CD4-positive, alpha-beta T cell (primary cell): ENCODE measurements at regions of chr2 and their contacts with region 1.

Region 1: GRCh38 chr2:11129598-11130449 is 25.4 kb upstream of the SLC66A3 start:
- DNase-seq: peak; percentile 71 to 94 (median 86)
- ATAC-seq: peak; percentile 91
- H3K4me3 ChIP-seq: peak overlapping the region; percentile 51
- H3K4me3 Mint-ChIP-seq: peak overlapping the region; percentile 77
- H3K27ac ChIP-seq: peak overlapping the region; percentile 51 to 74
- H3K27ac Mint-ChIP-seq: peak overlapping the region; percentile 76
- H3K4me1 ChIP-seq: peaks cover 54% of the 10 kb centered on the region
- H3K4me1 Mint-ChIP-seq: peaks cover 46% of the 10 kb centered on the region
- H3K27me3 ChIP-seq: no peaks in the 10 kb centered on the region
- H3K27me3 Mint-ChIP-seq: no peaks in the 10 kb centered on the region
- CTCF ChIP-seq: peak; percentile 69

Region 2: DNA sequence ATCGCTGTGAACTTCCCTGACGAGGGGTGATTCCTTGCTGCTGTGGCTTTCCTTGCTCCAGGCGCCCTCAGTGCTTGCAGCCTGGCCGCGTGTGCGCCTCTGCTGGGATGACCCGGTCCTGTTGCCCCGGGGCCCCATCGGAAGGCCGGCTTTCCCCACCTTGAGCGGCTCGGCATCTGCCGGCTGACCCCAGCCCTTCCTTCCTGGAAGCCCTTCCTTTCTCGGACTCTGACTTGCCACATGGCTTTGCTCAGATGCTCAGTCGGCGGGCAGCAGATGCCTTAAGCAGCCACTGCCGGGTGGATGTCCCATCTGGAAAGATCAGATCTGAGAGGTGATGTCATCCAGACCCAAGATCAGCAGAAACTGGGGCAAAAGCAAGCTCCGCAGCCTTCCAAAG is 581.2 kb before region 1 on chr2:
- CTCF ChIA-PET with region 1: no interaction called
- POLR2A ChIA-PET with region 1: no interaction called
- intact Hi-C with region 1: no loop called
- DNase-seq: no peak
- ATAC-seq: no peak
- H3K4me3 ChIP-seq: no peak overlapping the region
- H3K4me3 Mint-ChIP-seq: no peak overlapping the region
- H3K27ac ChIP-seq: no peak overlapping the region
- H3K27ac Mint-ChIP-seq: no peak overlapping the region
- H3K4me1 ChIP-seq: peaks cover 16% of the 10 kb centered on the region
- H3K4me1 Mint-ChIP-seq: no peaks in the 10 kb centered on the region
- H3K27me3 ChIP-seq: peaks cover 26 to 33% of the 10 kb centered on the region in 2 experiments
- H3K27me3 Mint-ChIP-seq: peaks cover 49% of the 10 kb centered on the region
- CTCF ChIP-seq: no peak

Region 3: DNA sequence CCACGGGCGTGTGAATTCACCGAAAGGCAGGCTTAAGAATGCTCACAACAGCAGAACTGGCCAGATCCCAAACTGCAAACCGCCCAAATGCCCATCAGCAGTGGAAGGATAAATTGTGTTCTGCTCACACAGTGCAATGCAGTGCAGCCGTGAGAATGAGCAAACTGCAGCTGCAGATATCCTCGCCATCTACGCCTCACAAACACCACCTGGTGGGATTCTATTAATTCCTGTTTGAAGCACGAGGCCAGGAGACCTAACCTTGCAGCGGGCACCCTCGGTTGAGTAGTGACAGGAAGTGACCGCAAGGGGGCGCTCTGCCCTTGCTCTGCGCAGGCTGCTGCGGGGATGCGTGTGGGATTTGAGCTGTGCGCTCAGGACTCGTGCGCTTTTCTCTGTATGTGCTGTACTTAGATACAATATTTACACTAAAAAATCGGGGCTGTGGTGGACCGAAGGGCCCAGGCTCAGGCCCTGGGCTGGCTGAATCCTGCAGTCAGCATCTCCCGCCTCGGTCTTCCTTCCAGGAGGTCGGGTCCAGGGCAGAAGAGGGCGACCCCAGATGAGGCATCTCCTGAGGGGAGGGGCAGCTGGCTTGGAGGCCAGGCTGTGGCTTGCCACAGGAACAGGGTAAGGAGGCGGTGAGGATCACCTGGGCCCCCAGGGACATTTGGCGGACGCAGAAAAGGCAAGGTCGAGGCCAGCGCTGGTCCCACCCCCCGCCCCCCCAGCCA is 297.5 kb before region 1 on chr2:
- CTCF ChIA-PET with region 1: interaction called, 21 read pairs
- POLR2A ChIA-PET with region 1: interaction called, 13 read pairs
- intact Hi-C with region 1: loop called in 1 of 2 experiments (anchors 1 kb)
- DNase-seq: peak; percentile 69 to 91 (median 78)
- ATAC-seq: peak; percentile 93
- H3K4me3 ChIP-seq: no peak overlapping the region
- H3K4me3 Mint-ChIP-seq: peak overlapping the region; percentile 38
- H3K27ac ChIP-seq: no peak overlapping the region
- H3K27ac Mint-ChIP-seq: no peak overlapping the region
- H3K4me1 ChIP-seq: peaks cover 15% of the 10 kb centered on the region
- H3K4me1 Mint-ChIP-seq: peaks cover 7% of the 10 kb centered on the region
- H3K27me3 ChIP-seq: peaks cover 8 to 10% of the 10 kb centered on the region in 2 experiments
- H3K27me3 Mint-ChIP-seq: peaks cover 24% of the 10 kb centered on the region
- CTCF ChIP-seq: peak; percentile 99

Region 4: DNA sequence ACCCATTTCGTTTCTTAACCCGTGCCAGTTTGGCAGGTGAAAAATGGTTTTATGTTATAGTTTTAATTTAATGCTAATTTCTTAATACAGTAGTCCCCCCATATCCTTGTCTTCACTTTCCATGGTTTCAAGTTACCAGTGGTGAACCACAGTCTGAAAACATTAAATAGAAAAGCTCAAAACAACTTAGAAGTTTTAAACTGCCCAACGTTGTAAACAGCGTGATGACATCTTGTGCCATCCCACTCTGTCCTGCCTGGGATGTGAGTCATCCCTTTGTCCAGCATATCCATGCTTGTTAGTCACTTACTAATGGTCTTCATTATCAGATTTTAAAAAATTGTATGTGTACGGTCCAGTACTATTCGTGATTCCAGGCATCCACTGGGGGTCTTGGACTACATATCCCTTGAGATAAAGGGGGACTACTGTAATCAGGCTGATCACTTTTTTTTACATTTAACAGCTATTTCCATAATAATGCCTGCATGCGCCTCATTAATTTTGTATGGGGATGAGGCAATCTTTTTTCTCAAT is 57.3 kb after region 1 on chr2:
- CTCF ChIA-PET with region 1: interaction called, 10 read pairs
- POLR2A ChIA-PET with region 1: no interaction called
- intact Hi-C with region 1: loop called in 1 of 2 experiments (anchors 5 kb)
- DNase-seq: peak in 2 of 14 experiments; percentile 10 to 26
- ATAC-seq: no peak
- H3K4me3 ChIP-seq: no peak overlapping the region
- H3K4me3 Mint-ChIP-seq: no peak overlapping the region
- H3K27ac ChIP-seq: no peak overlapping the region
- H3K27ac Mint-ChIP-seq: no peak overlapping the region
- H3K4me1 ChIP-seq: no peaks in the 10 kb centered on the region
- H3K4me1 Mint-ChIP-seq: no peaks in the 10 kb centered on the region
- H3K27me3 ChIP-seq: no peaks in the 10 kb centered on the region
- H3K27me3 Mint-ChIP-seq: no peaks in the 10 kb centered on the region
- CTCF ChIP-seq: no peak

Region 5: DNA sequence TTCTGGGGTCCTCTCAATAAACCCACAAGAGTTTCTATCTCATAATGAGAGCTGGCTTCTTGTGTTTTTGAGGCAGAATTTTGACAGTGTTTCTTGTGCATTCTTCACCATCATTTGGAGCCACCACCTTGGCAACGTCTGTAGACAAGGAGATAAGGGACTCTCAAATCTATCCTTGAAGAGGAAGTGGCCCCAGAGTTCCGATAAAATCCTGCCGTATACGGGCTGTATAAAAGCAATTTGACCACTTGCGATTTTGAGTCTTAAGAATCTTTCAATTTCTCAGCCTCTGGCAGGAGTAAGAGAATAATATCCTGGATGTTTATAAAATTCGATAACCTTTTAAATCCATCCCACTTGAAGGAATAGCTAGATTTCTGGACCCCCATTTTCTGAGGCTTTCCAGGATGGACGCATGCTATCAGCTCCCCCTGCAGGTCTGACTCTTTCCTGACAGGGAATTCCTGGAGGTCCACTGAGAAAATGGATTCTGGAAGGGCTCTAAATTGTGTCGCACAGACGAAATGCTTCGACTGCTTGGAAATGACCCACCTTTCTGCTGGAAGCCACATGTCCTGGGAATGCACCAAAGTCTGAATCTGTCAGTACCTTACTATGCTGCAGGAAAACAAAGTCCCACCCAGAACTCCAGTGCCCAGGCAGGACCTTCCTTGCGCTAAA is 282.1 kb after region 1 on chr2:
- CTCF ChIA-PET with region 1: no interaction called
- POLR2A ChIA-PET with region 1: no interaction called
- intact Hi-C with region 1: loop called in 1 of 2 experiments (anchors 2 kb)
- DNase-seq: peak in 4 of 14 experiments; percentile 9 to 22 (median 15)
- ATAC-seq: no peak
- H3K4me3 ChIP-seq: no peak overlapping the region
- H3K4me3 Mint-ChIP-seq: no peak overlapping the region
- H3K27ac ChIP-seq: no peak overlapping the region
- H3K27ac Mint-ChIP-seq: no peak overlapping the region
- H3K4me1 ChIP-seq: no peaks in the 10 kb centered on the region
- H3K4me1 Mint-ChIP-seq: no peaks in the 10 kb centered on the region
- H3K27me3 ChIP-seq: no peaks in the 10 kb centered on the region
- H3K27me3 Mint-ChIP-seq: peaks cover 18% of the 10 kb centered on the region
- CTCF ChIP-seq: peak; percentile 38

Region 6: DNA sequence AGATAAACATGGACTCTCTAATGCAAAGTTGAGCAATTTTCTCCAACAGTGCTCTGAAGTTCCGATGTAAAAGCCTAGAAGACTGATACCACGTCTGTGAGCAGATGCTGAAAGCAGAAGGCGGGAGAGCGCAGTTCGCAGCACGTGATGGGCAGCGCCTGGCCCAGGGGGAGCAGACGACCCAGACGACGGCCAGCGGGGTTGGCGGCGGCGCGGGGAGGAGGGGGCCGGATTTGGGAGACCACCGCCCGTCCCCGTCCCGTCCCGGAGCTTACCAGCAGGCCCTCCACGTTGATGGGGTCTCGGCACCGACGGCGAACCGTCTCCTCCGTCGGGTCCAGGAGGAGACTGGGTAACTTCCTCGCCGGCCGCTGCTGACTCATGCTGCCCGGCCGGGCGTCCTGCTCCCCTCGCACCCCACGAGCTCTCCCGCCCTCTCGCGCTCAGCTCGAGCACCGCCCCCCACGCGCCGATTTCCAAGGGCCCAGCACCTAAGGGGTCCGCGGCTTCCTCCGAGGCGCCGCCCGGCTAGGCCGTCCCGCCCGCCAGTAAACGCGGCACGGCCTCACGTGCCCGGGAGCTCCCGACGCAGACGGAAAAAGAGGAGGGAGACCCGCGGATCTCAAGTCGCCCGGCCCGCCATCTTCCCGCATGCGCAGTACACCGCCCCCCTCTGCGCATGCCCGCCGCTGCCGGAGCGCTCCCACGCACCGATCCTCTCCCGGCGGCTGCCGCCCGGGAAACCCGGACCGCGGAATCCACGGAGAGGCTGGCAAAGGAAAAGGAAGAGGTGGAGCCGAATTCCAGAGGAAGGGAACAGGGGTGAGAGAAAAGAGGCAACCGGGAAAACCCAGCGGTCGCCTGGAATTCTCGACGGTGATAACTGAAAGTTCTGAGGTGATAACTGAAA is 335.9 kb after region 1 on chr2 and contains the start of gene E2F6:
- CTCF ChIA-PET with region 1: interaction called, 5 read pairs
- POLR2A ChIA-PET with region 1: interaction called, 8 read pairs
- intact Hi-C with region 1: loop called in 1 of 2 experiments (anchors 5 kb)
- DNase-seq: peak; percentile 68 to 88 (median 81)
- ATAC-seq: peak; percentile 81
- H3K4me3 ChIP-seq: peak within 1 kb of the TSS; percentile 92
- H3K4me3 Mint-ChIP-seq: peak within 1 kb of the TSS; percentile 98
- H3K27ac ChIP-seq: peak within 1 kb of the TSS in 1 of 2 donors; percentile 11
- H3K27ac Mint-ChIP-seq: peak within 1 kb of the TSS; percentile 81
- H3K4me1 ChIP-seq: peaks cover 21% of the 10 kb centered on the region
- H3K4me1 Mint-ChIP-seq: peaks cover 49% of the 10 kb centered on the region
- H3K27me3 ChIP-seq: no peaks in the 10 kb centered on the region
- H3K27me3 Mint-ChIP-seq: no peaks in the 10 kb centered on the region
- CTCF ChIP-seq: no peak
- total RNA-seq, gene E2F6: 3.5 to 4.2 TPM

Region 7: DNA sequence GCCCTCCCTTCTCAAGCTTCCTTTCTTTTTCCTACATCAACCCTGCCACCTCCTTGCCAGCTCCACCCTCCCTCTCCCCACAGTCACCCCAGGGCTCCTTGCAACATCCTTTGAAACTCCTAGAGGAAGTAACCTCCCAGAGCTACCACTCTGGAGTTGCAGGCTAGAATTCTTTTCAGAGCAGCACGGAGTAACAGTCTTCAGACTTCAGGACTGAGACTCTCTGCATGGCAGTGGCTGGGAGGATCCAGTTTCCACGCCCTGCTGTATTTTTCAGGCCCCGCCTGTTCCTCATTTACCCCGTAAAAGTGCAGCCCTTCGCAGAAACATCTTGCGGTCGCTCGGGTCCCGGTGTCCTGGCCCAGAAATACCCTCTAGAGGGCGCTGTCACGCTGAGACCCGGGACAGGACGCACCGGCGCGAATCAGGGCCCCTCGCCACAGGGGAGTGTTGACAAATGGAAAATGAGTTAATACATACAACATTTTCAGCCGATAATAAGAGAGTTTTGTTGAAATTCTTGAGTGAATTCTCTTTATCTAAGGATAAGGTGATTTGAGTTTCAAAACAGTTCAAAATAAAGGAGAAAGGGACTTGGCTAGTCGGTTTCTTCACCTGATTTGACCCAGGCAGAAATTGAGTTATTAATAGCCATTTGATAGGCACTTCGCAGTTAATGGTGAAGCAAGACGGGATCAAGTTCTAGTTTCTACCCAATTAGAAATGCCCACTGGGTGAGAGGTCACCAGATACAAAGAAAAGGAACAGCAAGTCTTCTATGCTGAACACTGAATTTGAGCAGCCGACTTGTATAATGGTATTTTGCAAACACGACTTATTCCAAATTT is 558.6 kb after region 1 on chr2:
- CTCF ChIA-PET with region 1: no interaction called
- POLR2A ChIA-PET with region 1: no interaction called
- intact Hi-C with region 1: loop called in 1 of 2 experiments (anchors 5 kb)
- DNase-seq: peak; percentile 68 to 89 (median 76)
- ATAC-seq: peak; percentile 91
- H3K4me3 ChIP-seq: peak overlapping the region; percentile 1
- H3K4me3 Mint-ChIP-seq: no peak overlapping the region
- H3K27ac ChIP-seq: no peak overlapping the region
- H3K27ac Mint-ChIP-seq: no peak overlapping the region
- H3K4me1 ChIP-seq: peaks cover 10% of the 10 kb centered on the region
- H3K4me1 Mint-ChIP-seq: peaks cover 8% of the 10 kb centered on the region
- H3K27me3 ChIP-seq: no peaks in the 10 kb centered on the region
- H3K27me3 Mint-ChIP-seq: peaks cover 18% of the 10 kb centered on the region
- CTCF ChIP-seq: peak; percentile 85